ENCODE measurements at regions of chr10 and their contacts with region 1.

Region 1: GRCh38 chr10:26860443-26861204 is at the start of gene ABI1:
- DNase-seq: peak; percentile 90 to 99 (median 97)
- ATAC-seq: peak; percentile 91 to 94 (median 92)
- H3K4me3 ChIP-seq: peak within 1 kb of the TSS; percentile 94 to 96
- H3K4me3 Mint-ChIP-seq: peak within 1 kb of the TSS; percentile 96 to 98 (median 98)
- H3K27ac ChIP-seq: peak within 1 kb of the TSS; percentile 82
- H3K27ac Mint-ChIP-seq: peak within 1 kb of the TSS; percentile 97 to 98
- H3K4me1 ChIP-seq: peaks cover 22 to 25% of the 10 kb centered on the region in 2 experiments
- H3K4me1 Mint-ChIP-seq: peaks cover 30 to 45% (median 43%) of the 10 kb centered on the region in 3 donors
- H3K27me3 ChIP-seq: peaks cover 0 to 12% of the 10 kb centered on the region in 2 experiments
- H3K27me3 Mint-ChIP-seq: peaks cover 4 to 7% of the 10 kb centered on the region in 2 donors
- total RNA-seq, gene ABI1: 51.9 to 78.8 (median 60.0) TPM

Region 2: DNA sequence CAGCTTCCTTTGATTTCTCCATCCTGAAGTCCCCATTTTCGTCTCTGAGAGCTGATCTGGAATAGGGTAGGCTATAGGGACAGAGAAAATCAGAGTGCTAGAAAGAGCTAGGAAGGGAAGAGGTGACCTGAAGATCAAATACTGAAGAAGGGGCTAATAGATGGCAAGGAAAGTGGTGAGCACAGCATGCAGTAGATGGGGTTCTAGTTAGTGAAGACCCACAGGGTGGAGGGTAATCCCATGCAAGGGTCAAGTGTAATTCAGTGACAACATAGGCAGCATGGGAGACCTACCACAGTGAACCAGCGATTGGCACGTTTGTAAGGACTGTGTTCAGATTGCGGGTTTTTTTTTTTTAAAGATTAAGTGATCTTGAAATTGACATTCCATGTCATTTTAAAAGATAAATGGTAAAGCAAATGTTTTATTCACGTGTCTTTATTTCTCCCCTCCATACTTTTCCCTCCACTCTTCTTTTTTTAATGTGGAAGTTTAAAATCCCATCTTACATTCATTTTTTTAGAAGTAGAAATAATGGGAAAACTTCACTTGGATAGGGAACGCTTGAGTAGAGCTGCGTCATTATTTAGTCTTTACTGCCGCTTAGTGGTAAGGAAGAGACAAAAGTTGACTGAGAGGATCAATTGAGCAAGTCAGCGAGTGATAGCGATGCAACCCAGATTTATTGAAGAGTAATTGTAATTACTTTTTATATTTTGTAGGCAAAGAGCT is 21.1 kb after region 1 on chr10:
- CTCF ChIA-PET with region 1: interaction called, 6 to 10 read pairs
- POLR2A ChIA-PET with region 1: no interaction called
- DNase-seq: peak in 2 of 35 experiments; percentile 15 to 69
- ATAC-seq: peak; percentile 73 to 78 (median 76)
- H3K4me3 ChIP-seq: no peak overlapping the region
- H3K4me3 Mint-ChIP-seq: no peak overlapping the region
- H3K27ac ChIP-seq: no peak overlapping the region
- H3K27ac Mint-ChIP-seq: no peak overlapping the region
- H3K4me1 ChIP-seq: no peaks in the 10 kb centered on the region
- H3K4me1 Mint-ChIP-seq: peaks cover 0 to 3% (median 1%) of the 10 kb centered on the region in 3 donors
- H3K27me3 ChIP-seq: peaks cover 0 to 9% of the 10 kb centered on the region in 2 experiments
- H3K27me3 Mint-ChIP-seq: peaks cover 7 to 18% of the 10 kb centered on the region in 2 donors

Region 3: DNA sequence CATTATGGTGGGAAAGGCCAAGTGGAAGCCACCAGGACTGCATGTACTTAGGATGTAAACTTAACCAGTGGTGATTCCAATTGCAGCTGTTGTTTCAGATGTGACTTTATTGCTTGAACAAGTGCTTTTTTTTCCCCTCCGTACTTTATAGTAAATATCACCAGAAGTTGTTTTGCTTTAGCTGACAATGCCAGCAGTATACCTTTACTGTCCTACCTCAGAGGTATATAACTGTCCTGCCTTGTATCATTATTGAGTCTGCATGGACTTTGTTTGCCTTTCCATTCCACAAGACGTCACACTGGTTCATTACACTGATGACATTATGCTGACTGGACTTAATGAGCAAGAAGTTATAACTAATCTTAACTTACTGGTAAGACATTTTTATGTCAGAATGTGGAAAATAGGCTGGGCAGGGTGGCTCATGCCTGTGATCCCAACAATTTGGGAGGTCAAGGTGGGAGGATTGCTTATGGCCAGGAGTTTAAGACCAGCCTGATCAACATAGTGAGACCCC is 566.4 kb after region 1 on chr10:
- CTCF ChIA-PET with region 1: no interaction called
- POLR2A ChIA-PET with region 1: no interaction called
- DNase-seq: no peak
- ATAC-seq: no peak
- H3K4me3 ChIP-seq: no peak overlapping the region
- H3K4me3 Mint-ChIP-seq: no peak overlapping the region
- H3K27ac ChIP-seq: no peak overlapping the region
- H3K27ac Mint-ChIP-seq: no peak overlapping the region
- H3K4me1 ChIP-seq: no peaks in the 10 kb centered on the region
- H3K4me1 Mint-ChIP-seq: no peaks in the 10 kb centered on the region
- H3K27me3 ChIP-seq: no peaks in the 10 kb centered on the region
- H3K27me3 Mint-ChIP-seq: peaks cover 3 to 19% of the 10 kb centered on the region in 2 donors